MCF 10A (cell line): ENCODE measurements at regions of chr4 and their contacts with region 1.

Region 1: GRCh38 chr4:127965062-127965802 is at the starts of genes ABHD18 and MFSD8:
- DNase-seq: peak; percentile 99
- H3K4me3 Mint-ChIP-seq: peak within 1 kb of the TSS; percentile 97
- H3K27ac Mint-ChIP-seq: peak within 1 kb of the TSS; percentile 94
- H3K4me1 Mint-ChIP-seq: peaks cover 5% of the 10 kb centered on the region
- H3K27me3 Mint-ChIP-seq: no peaks in the 10 kb centered on the region
- CTCF ChIP-seq: peak; percentile 51
- total RNA-seq, gene ABHD18: 10.7 and 12.1 TPM in 2 replicates
- total RNA-seq, gene MFSD8: 17.7 and 24.1 TPM in 2 replicates

Region 2: GRCh38 chr4:127491571-127491970 is 473.7 kb before region 1 on chr4:
- CTCF ChIA-PET with region 1: no interaction called
- POLR2A ChIA-PET with region 1: no interaction called
- intact Hi-C with region 1: no loop called
- DNase-seq: no peak
- H3K4me3 Mint-ChIP-seq: no peak overlapping the region
- H3K27ac Mint-ChIP-seq: no peak overlapping the region
- H3K4me1 Mint-ChIP-seq: no peaks in the 10 kb centered on the region
- H3K27me3 Mint-ChIP-seq: no peaks in the 10 kb centered on the region
- CTCF ChIP-seq: no peak

Region 3: DNA sequence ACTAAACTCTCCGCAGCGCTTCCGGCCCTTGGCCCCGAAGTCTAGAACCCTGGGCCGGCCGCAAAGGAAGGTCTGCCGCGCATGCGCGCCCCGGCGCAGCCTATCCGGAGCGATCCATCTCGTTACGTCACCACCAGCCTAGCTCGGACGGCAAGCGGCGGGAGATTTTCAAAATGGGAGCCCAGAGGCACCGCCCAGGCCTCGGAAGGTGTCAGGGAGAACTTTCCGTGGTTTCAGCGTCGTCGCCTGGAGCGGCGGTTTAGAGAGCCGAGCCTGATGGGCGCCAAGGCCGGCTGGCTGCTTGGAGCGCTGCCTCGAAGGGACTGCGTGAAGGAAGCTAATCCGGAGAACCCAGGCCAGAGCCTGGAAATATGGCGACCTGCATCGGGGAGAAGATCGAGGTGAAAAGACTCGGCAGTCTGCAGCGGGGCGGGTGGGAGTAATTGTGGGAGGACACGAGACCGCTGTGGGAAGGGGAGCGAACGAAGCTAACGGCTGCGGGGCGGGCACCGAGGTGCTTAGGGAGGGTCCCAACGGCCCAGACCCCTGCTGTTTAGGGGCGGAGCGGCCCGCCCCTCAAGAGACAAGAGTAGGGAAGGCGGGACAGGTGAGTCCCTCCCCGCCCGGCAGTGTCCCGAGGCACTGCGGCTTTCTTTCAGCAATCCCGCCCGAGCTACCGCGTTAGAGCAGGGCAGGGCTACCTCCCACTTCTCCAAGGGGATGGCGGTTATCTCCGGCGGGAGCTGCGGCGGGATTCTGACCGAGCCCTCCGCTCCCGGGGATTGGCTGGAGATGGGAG is 84.3 kb before region 1 on chr4 and contains the start of gene PLK4:
- CTCF ChIA-PET with region 1: interaction called, 13 read pairs
- POLR2A ChIA-PET with region 1: interaction called, 75 read pairs
- intact Hi-C with region 1: loop called (anchors 1 kb)
- DNase-seq: peak; percentile 96
- H3K4me3 Mint-ChIP-seq: peak within 1 kb of the TSS; percentile 100
- H3K27ac Mint-ChIP-seq: peak within 1 kb of the TSS; percentile 99
- H3K4me1 Mint-ChIP-seq: peaks cover 18% of the 10 kb centered on the region
- H3K27me3 Mint-ChIP-seq: no peaks in the 10 kb centered on the region
- CTCF ChIP-seq: no peak
- total RNA-seq, gene PLK4: 8.9 and 10.9 TPM in 2 replicates

Region 4: DNA sequence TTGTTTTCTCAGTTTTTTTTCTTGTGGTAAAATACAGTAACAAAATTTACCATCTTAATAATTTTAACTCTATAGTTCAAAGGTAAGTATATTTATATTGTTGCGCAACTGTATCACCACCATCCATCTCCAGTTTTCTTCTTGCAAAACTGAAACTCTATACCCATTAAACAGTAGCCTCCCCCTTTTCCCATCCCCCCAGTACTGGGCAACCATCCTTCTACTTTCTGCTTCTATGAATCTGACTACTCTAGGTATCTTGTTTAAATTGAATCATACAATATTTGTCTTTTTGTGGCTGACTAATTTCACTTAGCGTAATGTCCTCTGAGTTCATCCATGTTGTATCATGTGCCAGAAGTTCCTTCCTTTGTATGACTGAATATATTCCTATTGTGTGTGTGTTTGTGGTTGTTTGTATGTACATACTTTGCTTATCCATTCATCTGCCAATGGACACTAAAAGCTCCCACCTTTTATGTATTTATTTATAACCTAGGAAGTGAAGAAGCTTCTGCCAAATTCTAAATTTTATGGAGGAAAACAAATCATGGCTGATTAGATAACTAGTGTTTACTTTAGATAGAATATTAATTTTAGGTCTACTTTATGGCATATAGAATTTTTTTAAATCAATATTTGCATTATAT is 10.0 kb after region 1 on chr4:
- CTCF ChIA-PET with region 1: interaction called, 6 read pairs
- POLR2A ChIA-PET with region 1: interaction called, 13 read pairs
- intact Hi-C with region 1: no loop called
- DNase-seq: peak; percentile 63
- H3K4me3 Mint-ChIP-seq: no peak overlapping the region
- H3K27ac Mint-ChIP-seq: no peak overlapping the region
- H3K4me1 Mint-ChIP-seq: peaks cover 6% of the 10 kb centered on the region
- H3K27me3 Mint-ChIP-seq: no peaks in the 10 kb centered on the region
- CTCF ChIP-seq: no peak

Region 5: DNA sequence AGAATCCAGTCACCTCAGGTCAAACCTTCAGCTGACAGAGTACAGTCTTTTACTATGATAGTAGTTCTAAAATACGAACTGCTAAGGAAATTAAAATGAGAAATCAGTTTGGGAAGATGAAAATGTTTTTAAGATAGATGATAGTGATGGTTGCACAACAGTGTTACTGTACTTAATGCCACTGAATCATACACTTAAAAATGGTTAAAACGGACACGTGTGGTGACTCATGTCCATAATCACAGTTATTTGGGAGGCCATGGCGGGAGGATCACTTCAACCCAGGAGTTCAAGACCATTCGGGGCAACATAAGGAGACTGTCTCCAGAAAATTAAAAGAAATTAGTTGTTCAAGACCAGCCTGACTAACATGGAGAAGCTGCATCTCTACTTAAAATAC is 41.4 kb after region 1 on chr4:
- CTCF ChIA-PET with region 1: interaction called, 10 read pairs
- POLR2A ChIA-PET with region 1: interaction called, 5 read pairs
- intact Hi-C with region 1: no loop called
- DNase-seq: peak; percentile 63
- H3K4me3 Mint-ChIP-seq: no peak overlapping the region
- H3K27ac Mint-ChIP-seq: peak overlapping the region; percentile 11
- H3K4me1 Mint-ChIP-seq: peaks cover 6% of the 10 kb centered on the region
- H3K27me3 Mint-ChIP-seq: no peaks in the 10 kb centered on the region
- CTCF ChIP-seq: no peak